ENCODE measurements at regions of chr1 and their contacts with region 1.

Region 1: GRCh38 chr1:24586970-24587820 is 31.3 kb downstream of the NCMAP start:
- DNase-seq: no peak
- ATAC-seq: peak; percentile 98
- H3K4me3 ChIP-seq: no peak overlapping the region
- H3K27ac ChIP-seq: no peak overlapping the region
- H3K4me1 ChIP-seq: no peaks in the 10 kb centered on the region
- H3K27me3 ChIP-seq: peaks cover 2 to 5% of the 10 kb centered on the region in 2 experiments; a peak in 2 of 4 replicates
- CTCF ChIP-seq: peak; percentile 78 to 84 (median 78)
- EP300 ChIP-seq: no peak
- POLR2A ChIP-seq: no peak
- RAD21 ChIP-seq: peak; percentile 75

Region 2: GRCh38 chr1:24403806-24404205 is 183.4 kb before region 1 on chr1:
- CTCF ChIA-PET with region 1: interaction called, 10 read pairs
- POLR2A ChIA-PET with region 1: no interaction called
- RAD21 ChIA-PET with region 1: interaction called, 5 read pairs
- SMC1A ChIA-PET with region 1: no interaction called
- in situ Hi-C with region 1: no loop called
- intact Hi-C with region 1: no loop called
- DNase-seq: no peak
- ATAC-seq: no peak
- H3K4me3 ChIP-seq: no peak overlapping the region
- H3K27ac ChIP-seq: no peak overlapping the region
- H3K4me1 ChIP-seq: no peaks in the 10 kb centered on the region
- H3K27me3 ChIP-seq: no peaks in the 10 kb centered on the region
- CTCF ChIP-seq: no peak
- EP300 ChIP-seq: no peak
- POLR2A ChIP-seq: no peak
- RAD21 ChIP-seq: no peak

Region 3: GRCh38 chr1:24409535-24409934 is 177.7 kb before region 1 on chr1:
- CTCF ChIA-PET with region 1: interaction called, 10 read pairs
- POLR2A ChIA-PET with region 1: no interaction called
- RAD21 ChIA-PET with region 1: interaction called, 11 read pairs
- SMC1A ChIA-PET with region 1: interaction called, 22 read pairs
- in situ Hi-C with region 1: no loop called
- intact Hi-C with region 1: no loop called
- DNase-seq: no peak
- ATAC-seq: no peak
- H3K4me3 ChIP-seq: no peak overlapping the region
- H3K27ac ChIP-seq: no peak overlapping the region
- H3K4me1 ChIP-seq: no peaks in the 10 kb centered on the region
- H3K27me3 ChIP-seq: no peaks in the 10 kb centered on the region
- CTCF ChIP-seq: no peak
- EP300 ChIP-seq: no peak
- POLR2A ChIP-seq: no peak
- RAD21 ChIP-seq: no peak

Region 4: DNA sequence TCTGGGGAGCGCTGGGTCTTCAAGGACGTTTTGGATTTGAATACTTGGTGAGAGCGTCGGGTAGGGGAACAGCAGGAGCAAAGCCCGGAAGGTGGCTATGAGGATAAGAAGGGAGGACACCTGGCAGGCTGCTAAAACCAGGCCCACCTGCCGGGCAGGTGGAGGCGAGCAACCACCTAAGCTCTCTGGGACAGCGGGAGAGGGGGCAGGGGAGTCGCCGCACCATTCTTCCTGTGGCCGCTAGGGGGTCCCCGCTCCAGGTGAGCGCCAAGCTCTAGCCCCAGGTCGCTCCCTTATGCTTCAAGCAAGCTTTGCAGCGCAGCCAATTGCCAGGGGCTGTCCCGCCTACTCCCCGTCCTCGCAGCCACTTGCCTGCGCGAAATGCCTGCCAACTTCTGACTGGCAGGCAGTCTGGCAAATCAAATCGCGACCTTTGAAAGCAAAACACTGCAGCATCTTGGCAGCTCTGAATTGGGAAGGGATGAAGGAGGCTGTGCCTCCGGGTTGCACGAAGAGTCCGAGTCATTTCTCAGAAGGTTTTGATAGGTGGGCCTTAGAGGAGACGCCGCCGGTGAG is 171.8 kb before region 1 on chr1 and contains the start of gene NIPAL3:
- CTCF ChIA-PET with region 1: interaction called, 35 read pairs
- POLR2A ChIA-PET with region 1: no interaction called
- RAD21 ChIA-PET with region 1: interaction called, 11 read pairs
- SMC1A ChIA-PET with region 1: interaction called, 22 read pairs
- in situ Hi-C with region 1: no loop called
- intact Hi-C with region 1: loop called (anchors 5 kb)
- DNase-seq: peak; percentile 98
- ATAC-seq: peak; percentile 99
- H3K4me3 ChIP-seq: peak within 1 kb of the TSS; percentile 80
- H3K27ac ChIP-seq: 0 out of 2 replicates have a peak within 1 kb of the TSS, but pooled peaks have one; percentile 0
- H3K4me1 ChIP-seq: peaks cover 9% of the 10 kb centered on the region
- H3K27me3 ChIP-seq: no peaks in the 10 kb centered on the region
- CTCF ChIP-seq: peak; percentile 91 to 95 (median 94)
- EP300 ChIP-seq: no peak
- POLR2A ChIP-seq: peak; percentile 40; the same call in 1 of the 2 replicates
- RAD21 ChIP-seq: peak; percentile 49
- polyA plus RNA-seq, gene NIPAL3: 2.1 TPM

Region 5: DNA sequence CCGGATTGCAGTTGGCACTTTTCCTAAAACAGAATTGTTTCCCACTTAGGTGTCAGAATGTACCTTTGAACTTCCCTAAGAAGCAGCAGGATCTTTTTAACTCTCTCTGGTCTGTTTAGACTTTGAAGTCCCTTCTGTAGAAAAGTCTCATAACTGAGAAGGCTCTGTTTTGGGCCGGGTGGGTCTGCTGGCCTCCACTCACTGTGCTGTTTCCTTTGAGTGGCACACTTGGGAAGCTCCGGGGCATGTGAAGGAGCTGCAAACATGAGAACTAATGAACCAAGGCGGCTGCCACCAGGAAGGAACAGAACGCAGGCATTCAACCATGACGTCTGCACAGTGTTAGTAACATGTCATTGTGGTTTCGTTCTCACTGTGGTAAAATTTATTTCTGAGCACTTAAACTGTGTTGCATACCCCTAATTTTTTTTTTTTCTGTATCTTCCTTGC is 50.8 kb before region 1 on chr1:
- CTCF ChIA-PET with region 1: interaction called, 10 read pairs
- POLR2A ChIA-PET with region 1: interaction called, 6 read pairs
- RAD21 ChIA-PET with region 1: interaction called, 7 read pairs
- SMC1A ChIA-PET with region 1: no interaction called
- in situ Hi-C with region 1: no loop called
- intact Hi-C with region 1: no loop called
- DNase-seq: peak; percentile 82
- ATAC-seq: peak; percentile 92
- H3K4me3 ChIP-seq: no peak overlapping the region
- H3K27ac ChIP-seq: no peak overlapping the region
- H3K4me1 ChIP-seq: peaks cover 18% of the 10 kb centered on the region
- H3K27me3 ChIP-seq: peaks cover 1 to 7% of the 10 kb centered on the region in 2 experiments; a peak in 3 of 4 replicates
- CTCF ChIP-seq: no peak
- EP300 ChIP-seq: peak in 1 of 2 experiments; percentile 56; a peak in 1 of 4 replicates
- POLR2A ChIP-seq: no peak
- RAD21 ChIP-seq: no peak

Region 6: DNA sequence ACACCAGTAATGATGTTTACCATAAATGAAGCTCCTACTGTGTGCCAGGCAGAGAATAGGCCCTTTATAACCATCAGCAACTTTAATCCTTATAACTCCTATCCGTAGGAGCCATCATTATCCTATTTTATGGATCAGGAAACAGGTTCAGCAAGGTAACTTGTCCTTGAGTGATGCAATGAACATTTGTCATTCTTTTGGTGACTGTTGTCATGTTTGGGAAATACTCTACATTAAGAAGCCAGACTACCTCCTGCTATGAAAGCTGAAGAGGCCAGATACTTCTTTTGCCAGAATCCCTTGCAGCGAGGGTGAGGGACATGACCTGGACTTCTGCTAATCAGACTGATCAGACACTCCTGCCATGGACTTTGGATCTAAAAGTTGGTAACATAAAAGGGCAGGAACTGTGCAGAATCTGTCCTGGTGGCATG is 22.8 kb after region 1 on chr1:
- CTCF ChIA-PET with region 1: interaction called, 12 read pairs
- POLR2A ChIA-PET with region 1: no interaction called
- RAD21 ChIA-PET with region 1: no interaction called
- SMC1A ChIA-PET with region 1: no interaction called
- in situ Hi-C with region 1: no loop called
- intact Hi-C with region 1: no loop called
- DNase-seq: no peak
- ATAC-seq: no peak
- H3K4me3 ChIP-seq: no peak overlapping the region
- H3K27ac ChIP-seq: no peak overlapping the region
- H3K4me1 ChIP-seq: no peaks in the 10 kb centered on the region
- H3K27me3 ChIP-seq: peaks cover 0 to 6% of the 10 kb centered on the region in 2 experiments; a peak in 2 of 4 replicates
- CTCF ChIP-seq: no peak
- EP300 ChIP-seq: no peak
- POLR2A ChIP-seq: no peak
- RAD21 ChIP-seq: no peak

Region 7: GRCh38 chr1:24635195-24635843 is 48.1 kb after region 1 on chr1:
- CTCF ChIA-PET with region 1: interaction called, 11 read pairs
- POLR2A ChIA-PET with region 1: interaction called, 3 read pairs
- RAD21 ChIA-PET with region 1: interaction called, 4 read pairs
- SMC1A ChIA-PET with region 1: interaction called, 3 read pairs
- in situ Hi-C with region 1: no loop called
- intact Hi-C with region 1: no loop called
- DNase-seq: no peak
- ATAC-seq: peak; percentile 86
- H3K4me3 ChIP-seq: no peak overlapping the region
- H3K27ac ChIP-seq: no peak overlapping the region
- H3K4me1 ChIP-seq: no peaks in the 10 kb centered on the region
- H3K27me3 ChIP-seq: no peaks in the 10 kb centered on the region
- CTCF ChIP-seq: peak; percentile 44 to 70 (median 57); a peak in 4 of 6 replicates
- EP300 ChIP-seq: no peak
- POLR2A ChIP-seq: no peak
- RAD21 ChIP-seq: peak; percentile 68